Endothelial cell of umbilical vein (primary cell): ENCODE measurements at regions of chr3 and their contacts with region 1.

Region 1: DNA sequence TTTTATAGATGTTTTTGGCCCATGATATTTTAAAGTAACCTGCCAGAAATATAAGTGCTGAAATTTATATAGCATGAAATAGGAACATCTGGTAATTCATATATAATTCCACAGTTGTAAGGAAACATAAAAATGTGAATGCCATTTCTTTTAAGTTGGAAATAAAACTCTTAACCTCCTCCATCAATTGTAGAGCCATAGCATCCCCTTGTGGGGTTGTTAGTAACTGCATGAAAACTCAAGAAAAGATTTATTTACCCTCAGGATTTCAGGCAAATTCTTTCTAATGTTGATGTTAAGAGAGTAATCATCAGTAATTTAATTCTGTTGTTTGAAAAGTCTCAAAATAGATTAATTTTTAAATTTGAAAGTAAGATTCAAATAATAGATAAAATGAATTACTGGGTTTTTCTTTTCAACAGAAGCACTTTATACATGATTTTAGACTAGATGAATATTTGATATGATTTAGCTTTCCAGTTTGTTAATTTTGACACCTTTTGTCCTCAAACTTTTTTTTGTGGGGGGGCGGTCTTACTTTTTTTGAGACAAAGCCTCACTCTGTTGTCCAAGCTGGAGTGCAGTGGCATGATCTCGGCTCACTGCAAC is 74.7 kb downstream of the RASA2 start:
- DNase-seq: peak; percentile 85
- H3K4me3 ChIP-seq: no peak overlapping the region
- H3K27ac ChIP-seq: no peak overlapping the region
- H3K4me1 ChIP-seq: peaks cover 15% of the 10 kb centered on the region
- H3K27me3 ChIP-seq: no peaks in the 10 kb centered on the region
- CTCF ChIP-seq: peak; percentile 72 to 75
- POLR2A ChIP-seq: no peak

Region 2: GRCh38 chr3:141303481-141304223 is 257.9 kb before region 1 on chr3:
- CTCF ChIA-PET with region 1: interaction called, 14 read pairs
- POLR2A ChIA-PET with region 1: no interaction called
- dilution Hi-C with region 1: no loop called
- intact Hi-C with region 1: loop called (anchors 1 kb)
- DNase-seq: peak; percentile 86
- H3K4me3 ChIP-seq: no peak overlapping the region
- H3K27ac ChIP-seq: no peak overlapping the region
- H3K4me1 ChIP-seq: no peaks in the 10 kb centered on the region
- H3K27me3 ChIP-seq: peaks cover 0 to 6% of the 10 kb centered on the region in 2 experiments
- CTCF ChIP-seq: peak; percentile 53 to 68
- POLR2A ChIP-seq: no peak

Region 3: DNA sequence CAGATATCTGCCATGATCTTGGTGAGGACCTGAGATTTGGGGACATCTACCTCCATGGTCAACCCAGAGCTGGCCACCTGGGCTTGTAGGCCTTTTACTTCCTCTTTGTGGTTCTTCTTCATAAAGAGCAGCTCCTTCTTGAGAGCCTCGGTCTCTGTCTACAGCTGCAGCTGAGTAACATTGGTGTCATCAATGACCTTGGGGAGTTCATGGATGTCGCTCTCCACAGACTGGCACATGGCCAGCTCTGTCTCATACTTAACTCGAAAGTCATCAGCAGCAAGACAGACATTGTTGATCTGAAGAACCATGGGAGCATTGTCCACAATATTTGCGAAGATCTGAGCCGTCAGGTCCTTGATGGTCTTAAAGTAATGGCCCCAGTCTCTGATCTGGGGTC is 90.4 kb before region 1 on chr3:
- CTCF ChIA-PET with region 1: interaction called, 69 read pairs
- POLR2A ChIA-PET with region 1: no interaction called
- dilution Hi-C with region 1: no loop called
- intact Hi-C with region 1: loop called (anchors 1 kb)
- DNase-seq: no peak
- H3K4me3 ChIP-seq: no peak overlapping the region
- H3K27ac ChIP-seq: no peak overlapping the region
- H3K4me1 ChIP-seq: no peaks in the 10 kb centered on the region
- H3K27me3 ChIP-seq: no peaks in the 10 kb centered on the region
- CTCF ChIP-seq: no peak
- POLR2A ChIP-seq: no peak

Region 4: GRCh38 chr3:141487521-141488252 is 73.8 kb before region 1 on chr3:
- CTCF ChIA-PET with region 1: interaction called, 20 read pairs
- POLR2A ChIA-PET with region 1: no interaction called
- dilution Hi-C with region 1: no loop called
- intact Hi-C with region 1: loop called (anchors 2 kb)
- DNase-seq: peak; percentile 60
- H3K4me3 ChIP-seq: peak overlapping the region; percentile 93 to 98 (median 96)
- H3K27ac ChIP-seq: peak overlapping the region; percentile 74
- H3K4me1 ChIP-seq: peaks cover 59% of the 10 kb centered on the region
- H3K27me3 ChIP-seq: no peaks in the 10 kb centered on the region
- CTCF ChIP-seq: no peak
- POLR2A ChIP-seq: peak; percentile 64

Region 5: GRCh38 chr3:141514382-141514781 is 47.1 kb before region 1 on chr3:
- CTCF ChIA-PET with region 1: interaction called, 11 read pairs
- POLR2A ChIA-PET with region 1: no interaction called
- dilution Hi-C with region 1: no loop called
- intact Hi-C with region 1: no loop called
- DNase-seq: no peak
- H3K4me3 ChIP-seq: no peak overlapping the region
- H3K27ac ChIP-seq: no peak overlapping the region
- H3K4me1 ChIP-seq: no peaks in the 10 kb centered on the region
- H3K27me3 ChIP-seq: no peaks in the 10 kb centered on the region
- CTCF ChIP-seq: no peak
- POLR2A ChIP-seq: no peak

Region 6: DNA sequence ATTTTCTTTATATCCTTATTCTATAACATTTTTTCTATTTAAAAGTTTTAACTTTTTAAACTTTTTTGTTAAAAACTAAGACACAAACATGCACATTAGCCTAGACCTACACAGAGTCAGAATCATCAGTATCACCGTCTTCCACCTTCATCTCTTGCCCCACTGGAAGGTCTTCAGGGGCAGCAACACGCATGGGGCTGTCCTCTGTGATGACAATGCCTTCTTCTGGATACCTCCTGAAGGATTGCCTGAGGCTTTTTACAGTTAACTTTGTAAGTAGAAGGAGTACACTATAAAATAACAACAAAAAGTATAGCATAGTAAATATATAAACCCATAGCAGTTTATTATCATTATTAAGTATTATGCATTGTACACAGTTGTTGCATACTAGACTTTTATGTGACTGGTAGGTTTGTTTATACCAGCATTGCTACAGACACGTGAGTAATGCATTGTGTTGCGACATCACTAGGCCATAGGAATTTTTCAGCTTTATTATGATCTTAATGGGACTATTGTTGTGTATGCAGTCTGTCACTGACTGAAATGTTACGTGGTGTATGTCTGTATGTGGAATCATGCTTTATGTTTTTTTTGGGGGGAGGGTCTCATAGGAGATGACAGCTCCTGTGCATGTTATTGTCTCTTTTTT is 333.1 kb after region 1 on chr3:
- CTCF ChIA-PET with region 1: no interaction called
- POLR2A ChIA-PET with region 1: no interaction called
- dilution Hi-C with region 1: no loop called
- intact Hi-C with region 1: no loop called
- DNase-seq: peak; percentile 39
- H3K4me3 ChIP-seq: no peak overlapping the region
- H3K27ac ChIP-seq: no peak overlapping the region
- H3K4me1 ChIP-seq: no peaks in the 10 kb centered on the region
- H3K27me3 ChIP-seq: no peaks in the 10 kb centered on the region
- CTCF ChIP-seq: no peak
- POLR2A ChIP-seq: no peak